ENCODE measurements at regions of chr3 and their contacts with region 1.

Region 1: GRCh38 chr3:46979151-46979978 is at the start of gene NBEAL2:
- DNase-seq: peak; percentile 93 to 96 (median 94)
- H3K4me3 ChIP-seq: peak within 1 kb of the TSS; percentile 85
- H3K4me3 Mint-ChIP-seq: peak within 1 kb of the TSS; percentile 83 to 97 (median 90)
- H3K27ac ChIP-seq: peak within 1 kb of the TSS; percentile 82
- H3K27ac Mint-ChIP-seq: peak within 1 kb of the TSS; percentile 86 to 98 (median 95)
- H3K4me1 ChIP-seq: peaks cover 66% of the 10 kb centered on the region
- H3K4me1 Mint-ChIP-seq: peaks cover 57 to 78% (median 68%) of the 10 kb centered on the region in 3 donors
- H3K27me3 ChIP-seq: no peaks in the 10 kb centered on the region
- H3K27me3 Mint-ChIP-seq: peaks cover 0 to 2% of the 10 kb centered on the region in 2 donors
- total RNA-seq, gene NBEAL2: 76.2 to 83.5 TPM

Region 2: DNA sequence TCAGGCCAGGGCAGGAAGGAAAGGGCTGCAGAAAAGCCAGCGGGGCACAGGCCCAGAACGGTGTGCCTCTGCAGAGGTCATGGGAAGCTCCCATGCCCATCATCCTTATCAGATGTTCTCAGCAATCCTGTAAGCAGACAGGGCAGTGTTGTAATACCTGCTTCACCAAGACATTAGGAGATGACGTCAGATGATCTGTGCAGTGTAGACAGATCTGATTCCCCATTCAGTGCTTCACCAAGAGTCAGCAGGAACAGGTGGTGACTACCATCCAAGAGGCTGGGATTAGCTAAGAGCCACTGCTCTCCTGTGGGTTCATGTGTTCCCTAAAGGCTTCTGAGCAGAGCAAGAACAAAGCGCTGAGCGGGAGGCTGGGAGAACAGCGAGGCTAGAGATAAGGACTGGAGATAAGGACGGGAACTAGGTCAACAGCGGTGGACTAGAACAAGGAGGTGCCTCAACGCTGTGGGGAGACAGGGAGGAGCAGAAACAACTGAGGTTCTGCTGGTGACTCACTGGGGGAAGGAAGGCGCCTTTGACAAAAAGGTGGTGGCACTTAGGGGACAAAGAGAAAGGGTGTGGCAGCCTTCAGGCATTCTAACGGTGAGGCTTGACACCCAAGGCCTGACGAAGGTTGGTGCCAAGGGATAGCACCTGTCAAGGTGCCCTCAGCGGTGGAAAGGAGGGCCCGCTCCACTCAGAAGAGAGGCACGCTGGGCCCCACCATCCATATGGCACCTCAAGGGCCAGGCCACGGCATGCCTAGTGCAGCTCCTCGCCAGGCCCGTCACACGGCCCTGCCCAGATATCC is 31.2 kb before region 1 on chr3:
- CTCF ChIA-PET with region 1: interaction called, 7 read pairs
- POLR2A ChIA-PET with region 1: interaction called, 16 read pairs
- DNase-seq: peak; percentile 26 to 89 (median 78)
- H3K4me3 ChIP-seq: peak overlapping the region; percentile 20
- H3K4me3 Mint-ChIP-seq: peak overlapping the region; percentile 45 to 86 (median 79)
- H3K27ac ChIP-seq: peak overlapping the region; percentile 76
- H3K27ac Mint-ChIP-seq: peak overlapping the region; percentile 86 to 100 (median 98)
- H3K4me1 ChIP-seq: peaks cover 96% of the 10 kb centered on the region
- H3K4me1 Mint-ChIP-seq: peaks cover 82 to 95% (median 93%) of the 10 kb centered on the region in 3 donors
- H3K27me3 ChIP-seq: no peaks in the 10 kb centered on the region
- H3K27me3 Mint-ChIP-seq: no peaks in the 10 kb centered on the region

Region 3: GRCh38 chr3:47009225-47010110 is 30.1 kb after region 1 on chr3:
- CTCF ChIA-PET with region 1: no interaction called
- POLR2A ChIA-PET with region 1: interaction called, 11 read pairs
- DNase-seq: peak; percentile 49 to 91 (median 82)
- H3K4me3 ChIP-seq: peak overlapping the region; percentile 26
- H3K4me3 Mint-ChIP-seq: peak overlapping the region; percentile 45 to 85 (median 71)
- H3K27ac ChIP-seq: no peak overlapping the region
- H3K27ac Mint-ChIP-seq: peak overlapping the region; percentile 60 to 94 (median 82)
- H3K4me1 ChIP-seq: no peaks in the 10 kb centered on the region
- H3K4me1 Mint-ChIP-seq: peaks cover 7 to 33% (median 9%) of the 10 kb centered on the region in 3 donors
- H3K27me3 ChIP-seq: no peaks in the 10 kb centered on the region
- H3K27me3 Mint-ChIP-seq: no peaks in the 10 kb centered on the region